Activated T-helper 2 cell treated with anti-CD3 and anti-CD28 coated beads, Interferon-gamma antibody, Interleukin-2, Interleukin-4, amounts not matched to agents 10 μg/mL and 5 μg/mL and 100 μg/mL, durations not matched to agents 14 hours and 24 hours and 36 hours (primary cell): ENCODE measurements at regions of chr3 and their contacts with region 1.

Region 1: DNA sequence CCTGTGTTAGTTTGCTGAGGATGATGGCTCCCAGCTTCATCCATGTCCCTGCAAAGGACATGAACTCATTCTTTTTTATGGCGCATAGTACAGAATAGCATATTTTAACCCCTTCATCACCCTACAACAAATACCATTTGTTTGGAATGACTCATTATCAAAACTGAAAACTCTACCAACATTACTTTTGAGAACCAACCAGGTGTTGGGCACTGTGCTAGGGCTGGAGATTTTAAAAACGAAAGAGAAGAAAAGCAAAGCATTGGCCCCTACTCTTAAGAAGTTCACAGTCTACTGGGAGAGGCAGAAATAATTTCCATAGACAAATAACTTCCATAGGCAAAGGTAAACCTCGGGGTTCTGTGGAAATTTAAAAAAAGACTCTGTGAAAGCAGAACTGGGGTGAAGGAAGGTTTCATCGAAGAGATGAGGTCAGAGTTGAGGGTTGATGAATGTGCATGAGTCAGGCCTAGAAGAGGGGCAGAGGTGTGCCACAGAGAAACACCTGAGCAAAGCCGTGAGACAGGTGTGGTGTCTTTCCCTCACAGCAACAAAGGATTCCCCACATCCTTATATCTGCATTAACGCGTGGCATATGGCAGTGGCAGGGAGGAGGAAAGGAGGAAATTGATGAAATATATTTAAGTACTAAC is 51.0 kb downstream of the MCF2L2 start:
- DNase-seq: no peak
- H3K4me3 Mint-ChIP-seq: no peak overlapping the region
- H3K27ac Mint-ChIP-seq: peak overlapping the region; percentile 25
- H3K4me1 Mint-ChIP-seq: peaks cover 38% of the 10 kb centered on the region
- H3K27me3 Mint-ChIP-seq: no peaks in the 10 kb centered on the region

Region 2: GRCh38 chr3:183038221-183038620 is 339.2 kb before region 1 on chr3:
- intact Hi-C with region 1: no loop called
- DNase-seq: no peak
- H3K4me3 Mint-ChIP-seq: no peak overlapping the region
- H3K27ac Mint-ChIP-seq: no peak overlapping the region
- H3K4me1 Mint-ChIP-seq: no peaks in the 10 kb centered on the region
- H3K27me3 Mint-ChIP-seq: no peaks in the 10 kb centered on the region

Region 3: GRCh38 chr3:183178629-183179549 is 198.5 kb before region 1 on chr3:
- intact Hi-C with region 1: loop called (anchors 1 kb)
- DNase-seq: no peak
- H3K4me3 Mint-ChIP-seq: peak overlapping the region; percentile 79
- H3K27ac Mint-ChIP-seq: no peak overlapping the region
- H3K4me1 Mint-ChIP-seq: peaks cover 11% of the 10 kb centered on the region
- H3K27me3 Mint-ChIP-seq: peaks cover 35% of the 10 kb centered on the region

Region 4: GRCh38 chr3:183252973-183253901 is 124.2 kb before region 1 on chr3 and contains the start of gene B3GNT5:
- intact Hi-C with region 1: loop called (anchors 1 kb)
- DNase-seq: no peak
- H3K4me3 Mint-ChIP-seq: peak within 1 kb of the TSS; percentile 85
- H3K27ac Mint-ChIP-seq: peak within 1 kb of the TSS; percentile 76
- H3K4me1 Mint-ChIP-seq: peaks cover 23% of the 10 kb centered on the region
- H3K27me3 Mint-ChIP-seq: no peaks in the 10 kb centered on the region
- total RNA-seq, gene B3GNT5: 41.0 and 41.7 TPM in 2 replicates

Region 5: GRCh38 chr3:183306798-183307671 is 70.4 kb before region 1 on chr3:
- intact Hi-C with region 1: loop called (anchors 2 kb)
- DNase-seq: peak; percentile 25
- H3K4me3 Mint-ChIP-seq: peak overlapping the region; percentile 2
- H3K27ac Mint-ChIP-seq: peak overlapping the region; percentile 81
- H3K4me1 Mint-ChIP-seq: peaks cover 29% of the 10 kb centered on the region
- H3K27me3 Mint-ChIP-seq: no peaks in the 10 kb centered on the region

Region 6: GRCh38 chr3:183427876-183428446 is 50.5 kb after region 1 on chr3:
- intact Hi-C with region 1: no loop called
- DNase-seq: peak; percentile 24
- H3K4me3 Mint-ChIP-seq: peak overlapping the region; percentile 81
- H3K27ac Mint-ChIP-seq: peak overlapping the region; percentile 14
- H3K4me1 Mint-ChIP-seq: peaks cover 39% of the 10 kb centered on the region
- H3K27me3 Mint-ChIP-seq: peaks cover 8% of the 10 kb centered on the region